Dorsolateral prefrontal cortex (tissue), 120 donors: ENCODE measurements at regions of chr12 and their contacts with region 1.

Region 1: GRCh38 chr12:123983822-123984485 is 10.9 kb downstream of the ZNF664 start:
- DNase-seq: peak in 6 of 10 donors; percentile 30 to 69 (median 58)
- H3K4me3 ChIP-seq: no peak overlapping the region
- H3K27ac ChIP-seq: peak overlapping the region in 23 of 59 donors; percentile 1 to 70 (median 32)
- H3K27me3 ChIP-seq: no peaks in the 10 kb centered on the region
- CTCF ChIP-seq: peak in 55 of 56 donors; percentile 26 to 83 (median 68)

Region 2: GRCh38 chr12:123801573-123802178 is 182.3 kb before region 1 on chr12:
- intact Hi-C with region 1: loop called (anchors 5 to 10 kb)
- DNase-seq: no peak
- H3K4me3 ChIP-seq: no peak overlapping the region
- H3K27ac ChIP-seq: no peak overlapping the region
- H3K27me3 ChIP-seq: no peaks in the 10 kb centered on the region
- CTCF ChIP-seq: peak in 53 of 56 donors; percentile 8 to 64 (median 47)

Region 3: DNA sequence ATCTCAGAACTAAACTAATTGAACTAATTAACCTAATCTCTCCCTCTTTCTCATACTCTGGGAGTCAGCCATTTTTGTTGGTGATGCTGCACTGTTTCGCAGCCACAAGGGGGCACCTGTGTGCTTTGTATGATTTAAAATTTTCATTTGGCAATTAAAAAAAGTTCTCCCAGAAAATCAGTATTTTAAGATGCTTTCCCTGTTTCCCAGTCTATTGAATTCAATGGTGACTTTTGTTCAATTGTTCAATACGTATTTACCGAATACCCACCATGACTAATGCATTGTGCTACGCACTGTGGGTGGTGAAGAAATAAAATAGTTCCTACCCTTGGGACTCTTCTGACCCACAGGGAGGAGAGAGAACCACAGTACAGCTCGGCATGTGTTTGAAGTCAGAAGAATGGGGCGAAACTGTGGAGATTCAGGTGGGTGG is 52.7 kb after region 1 on chr12:
- intact Hi-C with region 1: no loop called
- DNase-seq: peak in 6 of 10 donors; percentile 35 to 62 (median 49)
- H3K4me3 ChIP-seq: peak overlapping the region in 1 of 59 donors; percentile 7
- H3K27ac ChIP-seq: peak overlapping the region in 5 of 59 donors; percentile 5 to 47 (median 26)
- H3K27me3 ChIP-seq: no peaks in the 10 kb centered on the region
- CTCF ChIP-seq: peak; percentile 91 to 99 (median 97)